IMR-90 (cell line): ENCODE measurements at regions of chr4 and their contacts with region 1.

Region 1: DNA sequence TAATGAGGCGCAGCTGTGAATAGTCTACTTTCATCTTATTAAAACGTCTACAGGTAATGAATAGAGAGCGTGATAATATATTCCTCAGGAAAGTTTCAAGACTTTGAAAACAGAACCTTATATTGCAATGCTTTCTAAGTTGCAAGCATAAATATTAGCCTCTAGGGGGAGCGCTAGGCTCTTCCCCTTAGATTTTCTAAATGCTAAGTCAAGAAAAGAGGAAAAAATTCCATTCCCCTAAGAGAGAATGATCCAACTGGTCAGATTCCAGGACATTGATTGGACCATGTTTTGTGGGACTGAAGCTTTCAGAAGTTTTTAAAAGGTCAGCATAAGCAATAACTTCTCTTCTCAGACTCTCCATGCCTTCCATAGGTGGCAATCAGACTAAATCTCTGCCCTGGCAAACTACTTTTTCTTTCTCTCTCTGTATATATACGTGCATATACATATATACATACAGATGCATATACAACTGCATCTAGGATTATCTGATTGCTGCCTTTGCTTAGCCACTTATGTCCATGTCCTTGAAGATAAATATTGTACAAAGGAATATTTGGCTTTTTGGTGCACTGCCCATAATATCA is 492.9 kb downstream of the INPP4B start:
- DNase-seq: peak; percentile 80
- ATAC-seq: peak; percentile 74
- H3K4me3 ChIP-seq: no peak overlapping the region
- H3K27ac ChIP-seq: 0 out of 2 replicates have a peak overlapping the region, but pooled peaks have one; percentile 15
- H3K4me1 ChIP-seq: peaks cover 5% of the 10 kb centered on the region
- H3K27me3 ChIP-seq: no peaks in the 10 kb centered on the region
- CTCF ChIP-seq: peak; percentile 87
- POLR2A ChIP-seq: no peak
- RAD21 ChIP-seq: peak; percentile 83

Region 2: GRCh38 chr4:141636082-141636770 is 717.0 kb before region 1 on chr4 and contains the start of gene IL15:
- CTCF ChIA-PET with region 1: no interaction called
- POLR2A ChIA-PET with region 1: no interaction called
- dilution Hi-C with region 1: no loop called
- in situ Hi-C with region 1: no loop called
- intact Hi-C with region 1: loop called (anchors 10 kb)
- DNase-seq: peak; percentile 58
- ATAC-seq: peak; percentile 77
- H3K4me3 ChIP-seq: peak within 1 kb of the TSS; percentile 85
- H3K27ac ChIP-seq: peak within 1 kb of the TSS; percentile 84
- H3K4me1 ChIP-seq: no peaks in the 10 kb centered on the region
- H3K27me3 ChIP-seq: no peaks in the 10 kb centered on the region
- CTCF ChIP-seq: no peak
- POLR2A ChIP-seq: no peak
- RAD21 ChIP-seq: no peak
- total RNA-seq, gene IL15: 5.2 and 5.8 TPM in 2 replicates

Region 3: DNA sequence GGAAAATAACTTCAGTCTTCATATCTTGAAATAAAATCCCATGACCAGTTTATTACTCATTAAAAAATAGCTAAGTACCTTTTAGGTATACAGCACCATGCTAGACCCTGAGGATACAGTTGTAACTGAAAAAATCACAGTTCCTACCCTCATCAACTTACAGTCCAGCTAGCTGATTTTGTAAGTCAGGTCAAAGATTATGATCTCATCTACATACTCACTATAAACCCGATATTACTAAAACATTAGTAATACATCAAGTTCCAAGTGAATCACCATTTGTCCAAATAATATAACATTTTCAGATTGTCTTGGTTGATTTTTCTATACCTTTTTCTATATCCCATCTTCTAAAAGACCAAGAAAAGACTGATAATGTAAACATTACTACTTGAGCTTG is 158.9 kb after region 1 on chr4:
- CTCF ChIA-PET with region 1: no interaction called
- POLR2A ChIA-PET with region 1: no interaction called
- dilution Hi-C with region 1: no loop called
- in situ Hi-C with region 1: no loop called
- intact Hi-C with region 1: no loop called
- DNase-seq: peak; percentile 51
- ATAC-seq: peak; percentile 35; the same call in 1 of the 2 replicates
- H3K4me3 ChIP-seq: no peak overlapping the region
- H3K27ac ChIP-seq: no peak overlapping the region
- H3K4me1 ChIP-seq: peaks cover 3% of the 10 kb centered on the region
- H3K27me3 ChIP-seq: no peaks in the 10 kb centered on the region
- CTCF ChIP-seq: no peak
- POLR2A ChIP-seq: no peak
- RAD21 ChIP-seq: no peak

Region 4: DNA sequence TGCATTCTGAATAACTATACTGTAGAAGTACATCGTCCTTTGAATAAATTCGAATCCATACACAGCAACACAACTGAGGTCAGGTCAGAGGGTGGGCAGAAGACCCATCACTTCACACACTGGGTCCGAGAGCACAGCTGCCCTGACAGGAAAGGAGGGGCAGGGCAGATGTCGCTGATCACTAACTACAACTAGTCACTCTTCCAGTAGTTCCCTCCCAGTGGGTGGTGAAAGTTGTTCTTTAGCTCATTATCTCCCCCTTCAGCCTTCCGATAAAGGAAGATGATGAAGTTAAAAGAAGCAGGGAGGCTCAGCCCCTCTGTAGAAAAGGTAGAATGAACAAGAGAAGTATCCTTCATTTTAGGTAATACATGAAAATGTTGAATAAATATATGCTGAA is 214.0 kb after region 1 on chr4:
- CTCF ChIA-PET with region 1: no interaction called
- POLR2A ChIA-PET with region 1: no interaction called
- dilution Hi-C with region 1: no loop called
- in situ Hi-C with region 1: no loop called
- intact Hi-C with region 1: loop called (anchors 5 kb)
- DNase-seq: no peak
- ATAC-seq: no peak
- H3K4me3 ChIP-seq: no peak overlapping the region
- H3K27ac ChIP-seq: no peak overlapping the region
- H3K4me1 ChIP-seq: 0 out of 2 replicates have a peak, but pooled peaks cover 1% of the 10 kb centered on the region
- H3K27me3 ChIP-seq: no peaks in the 10 kb centered on the region
- CTCF ChIP-seq: no peak
- POLR2A ChIP-seq: no peak
- RAD21 ChIP-seq: no peak

Region 5: GRCh38 chr4:142832022-142832421 is 478.8 kb after region 1 on chr4:
- CTCF ChIA-PET with region 1: interaction called, 3 read pairs
- POLR2A ChIA-PET with region 1: no interaction called
- dilution Hi-C with region 1: no loop called
- in situ Hi-C with region 1: no loop called
- intact Hi-C with region 1: loop called (anchors 2 kb)
- DNase-seq: no peak
- ATAC-seq: no peak
- H3K4me3 ChIP-seq: no peak overlapping the region
- H3K27ac ChIP-seq: no peak overlapping the region
- H3K4me1 ChIP-seq: no peaks in the 10 kb centered on the region; the same call in 1 of the 2 replicates
- H3K27me3 ChIP-seq: no peaks in the 10 kb centered on the region
- CTCF ChIP-seq: no peak
- POLR2A ChIP-seq: no peak
- RAD21 ChIP-seq: no peak

Region 6: DNA sequence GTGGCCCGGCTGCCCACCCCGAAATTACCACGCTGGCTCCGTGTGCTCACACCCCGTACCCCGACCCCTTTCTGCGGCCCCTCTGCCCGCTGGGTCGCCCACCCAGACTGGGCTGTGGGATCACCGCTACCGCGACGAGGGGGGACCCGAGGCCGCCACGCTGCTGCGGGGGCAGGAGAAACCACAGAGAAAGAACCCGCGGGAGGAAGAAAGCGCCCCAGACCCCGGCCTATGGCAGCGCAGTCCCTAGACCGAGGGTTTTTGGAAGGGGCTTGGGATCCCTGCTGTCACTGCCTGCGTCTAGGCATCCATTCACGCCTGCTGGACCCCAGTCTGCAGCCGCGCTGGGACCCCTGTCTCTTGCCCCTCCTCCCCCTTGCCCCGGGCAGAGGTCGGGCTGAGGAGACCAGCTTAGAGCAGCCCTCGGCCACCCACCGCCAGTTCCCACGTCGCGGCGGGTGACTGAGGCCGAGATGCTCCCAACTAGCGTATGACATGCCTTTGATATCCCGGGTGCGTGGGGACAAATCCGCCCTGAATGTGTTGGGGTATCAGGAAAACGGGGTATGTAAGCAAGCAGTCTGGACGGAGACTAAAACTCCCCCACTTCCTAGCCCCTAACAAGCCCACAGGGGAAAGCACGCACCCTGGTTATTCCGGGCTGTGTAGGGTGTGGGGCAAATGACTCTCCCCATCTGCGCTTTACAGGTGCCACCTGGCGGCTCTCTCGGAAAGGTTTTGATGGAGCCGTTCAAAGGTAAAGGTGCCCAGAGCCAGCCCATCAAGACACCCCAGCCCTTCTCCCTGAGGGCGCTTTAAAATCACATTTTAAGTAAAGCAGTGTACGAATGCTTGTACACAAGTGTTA is 493.7 kb after region 1 on chr4:
- CTCF ChIA-PET with region 1: interaction called, 5 read pairs
- POLR2A ChIA-PET with region 1: no interaction called
- dilution Hi-C with region 1: no loop called
- in situ Hi-C with region 1: loop called (anchors 10 kb)
- intact Hi-C with region 1: no loop called
- DNase-seq: no peak
- ATAC-seq: peak; percentile 19; the same call in 1 of the 2 replicates
- H3K4me3 ChIP-seq: peak overlapping the region; percentile 61
- H3K27ac ChIP-seq: peak overlapping the region; percentile 25; the same call in 1 of the 2 replicates
- H3K4me1 ChIP-seq: no peaks in the 10 kb centered on the region
- H3K27me3 ChIP-seq: peaks cover 10% of the 10 kb centered on the region
- CTCF ChIP-seq: no peak
- POLR2A ChIP-seq: no peak
- RAD21 ChIP-seq: no peak

Region 7: GRCh38 chr4:143184217-143185116 is 831.2 kb after region 1 on chr4 and contains the start of gene USP38:
- CTCF ChIA-PET with region 1: no interaction called
- POLR2A ChIA-PET with region 1: no interaction called
- dilution Hi-C with region 1: no loop called
- in situ Hi-C with region 1: no loop called
- intact Hi-C with region 1: loop called (anchors 5 kb)
- DNase-seq: peak; percentile 94
- ATAC-seq: peak; percentile 88
- H3K4me3 ChIP-seq: peak within 1 kb of the TSS; percentile 74
- H3K27ac ChIP-seq: peak within 1 kb of the TSS; percentile 87
- H3K4me1 ChIP-seq: no peaks in the 10 kb centered on the region
- H3K27me3 ChIP-seq: no peaks in the 10 kb centered on the region
- CTCF ChIP-seq: peak; percentile 14; the same call in 1 of the 2 replicates
- POLR2A ChIP-seq: no peak; the same call in 1 of the 2 replicates
- RAD21 ChIP-seq: no peak
- total RNA-seq, gene USP38: 16.4 and 17.0 TPM in 2 replicates